ENCODE measurements at regions of chr5 and their contacts with region 1.

Region 1: DNA sequence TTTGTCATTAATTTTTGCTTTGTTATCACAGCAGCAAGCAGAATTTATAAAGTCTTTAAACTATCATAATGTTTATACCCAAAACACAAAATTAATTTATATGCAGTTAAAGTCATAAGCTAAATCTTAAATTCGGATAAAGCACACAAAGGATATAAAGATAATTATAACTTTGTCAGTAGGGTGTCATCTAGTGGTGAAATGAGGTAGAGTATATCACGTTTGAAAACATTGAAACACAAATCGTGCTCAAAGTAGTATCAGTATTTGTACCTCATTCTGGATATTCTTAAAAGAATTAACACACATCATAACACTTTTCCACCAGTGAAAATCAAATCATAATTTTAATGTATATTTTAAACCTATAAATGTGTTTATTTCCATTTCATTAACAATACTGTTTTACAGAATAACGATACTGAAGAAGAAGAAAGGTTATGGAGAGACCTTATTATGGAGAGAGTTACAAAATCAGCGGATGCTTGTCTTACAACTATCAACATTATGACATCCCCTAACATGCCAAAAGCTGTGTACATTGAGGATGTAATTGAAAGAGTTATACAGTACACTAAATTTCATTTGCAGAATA is 129.5 kb downstream of the NIPBL start:
- DNase-seq: peak; percentile 12 to 18 (median 16)
- ATAC-seq: peak; percentile 77
- H3K4me3 ChIP-seq: no peak overlapping the region
- H3K27ac ChIP-seq: no peak overlapping the region
- H3K4me1 ChIP-seq: no peaks in the 10 kb centered on the region
- H3K27me3 ChIP-seq: no peaks in the 10 kb centered on the region
- CTCF ChIP-seq: peak in 2 of 3 experiments; percentile 19 to 73; a peak in 3 of 6 replicates
- EP300 ChIP-seq: no peak
- POLR2A ChIP-seq: no peak
- RAD21 ChIP-seq: peak; percentile 53 to 62

Region 2: DNA sequence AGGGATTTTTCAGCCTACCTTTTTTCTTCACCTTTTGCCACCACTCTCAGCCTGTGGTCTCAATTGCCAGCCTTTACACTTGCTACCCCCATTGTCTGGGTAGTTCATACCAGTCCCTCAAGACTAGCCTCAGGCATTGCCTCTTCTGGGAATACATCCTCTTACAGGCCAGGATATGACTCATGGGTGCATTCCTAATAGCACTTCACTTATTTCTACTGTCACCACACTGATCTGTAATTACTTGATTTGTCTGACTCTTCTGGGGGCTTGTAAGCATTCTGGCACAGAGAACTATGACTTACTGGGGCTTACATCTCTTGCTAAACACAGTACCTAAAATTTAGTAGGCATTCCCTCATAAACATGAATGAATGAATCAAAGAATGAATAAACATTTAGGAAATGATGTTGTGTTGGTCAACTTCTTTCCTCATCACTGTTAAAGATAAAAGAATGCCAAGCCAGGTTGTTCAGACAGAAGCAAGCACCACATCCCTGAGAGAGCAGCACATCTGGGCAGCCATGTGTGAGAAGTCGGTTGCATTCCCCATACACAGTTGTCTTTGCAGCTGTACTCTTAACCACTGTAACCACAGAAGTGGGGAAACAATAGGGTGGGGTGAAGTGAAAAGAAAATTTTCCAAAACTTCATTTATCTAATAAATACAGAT is 1121.8 kb before region 1 on chr5:
- CTCF ChIA-PET with region 1: no interaction called
- POLR2A ChIA-PET with region 1: no interaction called
- in situ Hi-C with region 1: no loop called
- intact Hi-C with region 1: no loop called
- DNase-seq: no peak
- ATAC-seq: no peak
- H3K4me3 ChIP-seq: no peak overlapping the region
- H3K27ac ChIP-seq: no peak overlapping the region
- H3K4me1 ChIP-seq: no peaks in the 10 kb centered on the region
- H3K27me3 ChIP-seq: no peaks in the 10 kb centered on the region
- CTCF ChIP-seq: no peak
- EP300 ChIP-seq: no peak
- POLR2A ChIP-seq: no peak
- RAD21 ChIP-seq: no peak

Region 3: GRCh38 chr5:36728697-36729543 is 277.1 kb before region 1 on chr5:
- CTCF ChIA-PET with region 1: interaction called, 12 read pairs
- POLR2A ChIA-PET with region 1: no interaction called
- in situ Hi-C with region 1: no loop called
- intact Hi-C with region 1: no loop called
- DNase-seq: peak; percentile 57 to 79 (median 71)
- ATAC-seq: peak; percentile 83
- H3K4me3 ChIP-seq: no peak overlapping the region
- H3K27ac ChIP-seq: no peak overlapping the region
- H3K4me1 ChIP-seq: no peaks in the 10 kb centered on the region; a peak in 1 of 5 replicates
- H3K27me3 ChIP-seq: peaks cover 8 to 11% of the 10 kb centered on the region in 2 experiments; a peak in 4 of 5 replicates
- CTCF ChIP-seq: peak; percentile 65 to 75 (median 71); a peak in 5 of 6 replicates
- EP300 ChIP-seq: no peak
- POLR2A ChIP-seq: no peak
- RAD21 ChIP-seq: peak; percentile 46 to 73

Region 4: GRCh38 chr5:36734422-36734821 is 271.6 kb before region 1 on chr5:
- CTCF ChIA-PET with region 1: interaction called, 13 read pairs
- POLR2A ChIA-PET with region 1: no interaction called
- in situ Hi-C with region 1: no loop called
- intact Hi-C with region 1: no loop called
- DNase-seq: peak in 2 of 4 experiments; percentile 34 to 70
- ATAC-seq: peak; percentile 86
- H3K4me3 ChIP-seq: no peak overlapping the region
- H3K27ac ChIP-seq: no peak overlapping the region
- H3K4me1 ChIP-seq: peaks cover 0 to 7% of the 10 kb centered on the region in 2 experiments; a peak in 4 of 5 replicates
- H3K27me3 ChIP-seq: peaks cover 2 to 5% of the 10 kb centered on the region in 2 experiments; a peak in 2 of 5 replicates
- CTCF ChIP-seq: peak; percentile 33 to 67 (median 58); a peak in 5 of 6 replicates
- EP300 ChIP-seq: no peak
- POLR2A ChIP-seq: no peak
- RAD21 ChIP-seq: peak; percentile 77 to 80

Region 5: GRCh38 chr5:36870399-36871040 is 135.5 kb before region 1 on chr5:
- CTCF ChIA-PET with region 1: interaction called, 3 read pairs
- POLR2A ChIA-PET with region 1: no interaction called
- in situ Hi-C with region 1: no loop called
- intact Hi-C with region 1: loop called (anchors 5 kb)
- DNase-seq: peak; percentile 42 to 82 (median 60)
- ATAC-seq: peak; percentile 67
- H3K4me3 ChIP-seq: no peak overlapping the region
- H3K27ac ChIP-seq: no peak overlapping the region
- H3K4me1 ChIP-seq: peaks cover 0 to 3% of the 10 kb centered on the region in 2 experiments; a peak in 3 of 5 replicates
- H3K27me3 ChIP-seq: no peaks in the 10 kb centered on the region
- CTCF ChIP-seq: peak; percentile 64 to 86 (median 68); a peak in 5 of 6 replicates
- EP300 ChIP-seq: 0 out of 2 replicates have a peak, but pooled peaks have one; percentile 24
- POLR2A ChIP-seq: 0 out of 2 replicates have a peak, but pooled peaks have one; percentile 19
- RAD21 ChIP-seq: peak; percentile 83 to 85

Measured in K562 (cell line).